Ovary (tissue), 10 donors: ENCODE measurements at regions of chr6 and their contacts with region 1.

Region 1: DNA sequence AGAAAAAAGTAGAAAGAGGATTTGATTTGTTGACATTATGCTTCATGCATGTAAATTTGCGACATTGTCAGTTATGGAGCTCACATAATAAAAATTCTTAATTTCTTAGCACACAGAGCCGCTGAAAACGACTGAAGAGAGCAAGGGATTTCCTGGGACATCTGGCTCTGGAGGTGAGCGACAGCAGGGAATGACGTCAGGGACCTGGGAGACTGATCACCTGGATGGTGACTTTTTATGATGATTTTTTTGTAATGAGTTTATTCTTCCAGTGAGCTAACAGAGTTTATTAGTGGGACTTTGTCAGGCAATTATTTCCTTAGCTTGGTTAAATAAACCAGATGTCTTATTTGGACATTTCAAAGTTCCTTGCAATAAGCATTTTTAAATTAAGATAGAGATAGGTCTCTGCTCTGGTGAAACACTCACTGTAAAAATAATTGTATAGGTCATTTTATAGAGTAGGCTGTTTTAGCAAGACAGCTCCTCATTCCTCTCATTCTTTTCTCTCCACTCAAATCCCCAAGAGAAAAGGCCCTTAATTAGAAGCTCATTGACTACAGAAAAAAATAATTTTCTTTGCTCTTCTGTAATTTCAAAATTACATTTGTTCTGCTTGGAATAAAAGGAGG is 19.4 kb downstream of the TMEM200A start:
- DNase-seq: no peak
- H3K4me3 ChIP-seq: no peak overlapping the region
- H3K27ac ChIP-seq: no peak overlapping the region
- H3K4me1 ChIP-seq: no peaks in the 10 kb centered on the region
- H3K27me3 ChIP-seq: no peaks in the 10 kb centered on the region
- CTCF ChIP-seq: no peak
- EP300 ChIP-seq: no peak
- POLR2A ChIP-seq: no peak

Region 2: GRCh38 chr6:130407032-130407431 is 21.9 kb after region 1 on chr6:
- intact Hi-C with region 1: loop called in 1 of 4 experiments (anchors 1 kb)
- DNase-seq: no peak
- H3K4me3 ChIP-seq: no peak overlapping the region
- H3K27ac ChIP-seq: no peak overlapping the region
- H3K4me1 ChIP-seq: no peaks in the 10 kb centered on the region
- H3K27me3 ChIP-seq: no peaks in the 10 kb centered on the region
- CTCF ChIP-seq: no peak
- EP300 ChIP-seq: no peak
- POLR2A ChIP-seq: no peak